ENCODE measurements at regions of chr6 and their contacts with region 1.

Region 1: GRCh38 chr6:14075095-14075503 is 42.5 kb upstream of the CD83 start:
- DNase-seq: peak; percentile 72
- H3K4me3 ChIP-seq: peak overlapping the region; percentile 37
- H3K27ac ChIP-seq: peak overlapping the region; percentile 71
- H3K4me1 ChIP-seq: peaks cover 18% of the 10 kb centered on the region
- H3K27me3 ChIP-seq: no peaks in the 10 kb centered on the region
- CTCF ChIP-seq: no peak

Region 2: GRCh38 chr6:14046476-14047068 is 28.5 kb before region 1 on chr6:
- CTCF ChIA-PET with region 1: interaction called, 13 read pairs
- POLR2A ChIA-PET with region 1: no interaction called
- intact Hi-C with region 1: no loop called
- DNase-seq: peak; percentile 66
- H3K4me3 ChIP-seq: no peak overlapping the region
- H3K27ac ChIP-seq: no peak overlapping the region
- H3K4me1 ChIP-seq: peaks cover 3% of the 10 kb centered on the region
- H3K27me3 ChIP-seq: no peaks in the 10 kb centered on the region
- CTCF ChIP-seq: peak; percentile 83

Measured in A673 (cell line).